IMR-90 (cell line): ENCODE measurements at regions of chr1 and their contacts with region 1.

Region 1: GRCh38 chr1:12619792-12620487 is 1.9 kb upstream of the DHRS3 start:
- DNase-seq: peak; percentile 87
- ATAC-seq: peak; percentile 72
- H3K4me3 ChIP-seq: no peak overlapping the region
- H3K27ac ChIP-seq: no peak overlapping the region
- H3K4me1 ChIP-seq: peaks cover 18% of the 10 kb centered on the region
- H3K27me3 ChIP-seq: no peaks in the 10 kb centered on the region
- CTCF ChIP-seq: peak; percentile 96
- POLR2A ChIP-seq: peak; percentile 54; the same call in 1 of the 2 replicates
- RAD21 ChIP-seq: peak; percentile 99

Region 2: DNA sequence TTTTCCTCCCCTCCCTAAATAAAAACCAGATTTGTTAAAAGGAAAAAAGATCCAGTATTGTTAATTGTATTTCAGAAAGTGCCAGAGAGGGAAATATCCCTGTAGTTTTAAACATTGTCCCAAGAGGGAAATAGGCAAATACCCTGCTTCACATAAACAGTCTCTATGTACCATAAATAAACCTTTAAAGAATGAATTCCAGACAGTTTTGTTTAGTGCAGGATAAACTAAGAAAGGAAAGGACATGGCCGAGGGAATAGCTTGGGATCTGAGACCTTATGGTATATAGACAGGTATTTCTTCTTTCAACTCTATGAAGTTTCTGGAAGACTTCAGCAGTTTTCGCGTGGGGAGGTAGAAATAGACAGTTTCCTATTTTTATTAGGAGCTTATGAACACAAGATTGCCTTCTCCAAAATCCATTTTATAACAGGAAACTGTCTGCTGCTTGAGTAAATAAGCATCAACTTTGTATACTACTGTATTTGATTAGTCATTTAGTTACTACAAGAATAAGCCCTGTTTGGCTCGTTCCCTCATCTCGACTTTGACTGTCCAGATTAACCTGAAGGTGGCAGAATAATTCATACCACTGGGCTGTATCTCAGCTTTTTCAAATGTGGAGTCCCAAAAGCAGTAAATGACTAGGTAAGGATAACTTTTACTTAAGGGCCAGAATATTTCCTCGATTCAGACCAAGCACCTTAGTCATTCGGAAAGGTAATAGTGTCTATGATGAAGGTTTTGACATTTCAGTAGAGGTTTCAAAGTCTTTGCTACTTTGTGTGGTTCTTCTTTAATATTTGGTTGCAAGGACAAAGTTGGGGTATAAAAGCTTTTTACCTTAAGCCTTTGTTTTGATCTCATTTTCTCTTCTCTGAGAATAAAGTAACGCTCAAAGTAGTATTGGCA is 212.6 kb before region 1 on chr1:
- CTCF ChIA-PET with region 1: interaction called, 4 read pairs
- POLR2A ChIA-PET with region 1: no interaction called
- dilution Hi-C with region 1: no loop called
- in situ Hi-C with region 1: loop called (anchors 25 kb)
- intact Hi-C with region 1: loop called (anchors 1 kb)
- DNase-seq: peak; percentile 84
- ATAC-seq: peak; percentile 86
- H3K4me3 ChIP-seq: no peak overlapping the region
- H3K27ac ChIP-seq: peak overlapping the region; percentile 61; the same call in 1 of the 2 replicates
- H3K4me1 ChIP-seq: peaks cover 22% of the 10 kb centered on the region
- H3K27me3 ChIP-seq: no peaks in the 10 kb centered on the region
- CTCF ChIP-seq: peak; percentile 51
- POLR2A ChIP-seq: no peak
- RAD21 ChIP-seq: peak; percentile 66

Region 3: DNA sequence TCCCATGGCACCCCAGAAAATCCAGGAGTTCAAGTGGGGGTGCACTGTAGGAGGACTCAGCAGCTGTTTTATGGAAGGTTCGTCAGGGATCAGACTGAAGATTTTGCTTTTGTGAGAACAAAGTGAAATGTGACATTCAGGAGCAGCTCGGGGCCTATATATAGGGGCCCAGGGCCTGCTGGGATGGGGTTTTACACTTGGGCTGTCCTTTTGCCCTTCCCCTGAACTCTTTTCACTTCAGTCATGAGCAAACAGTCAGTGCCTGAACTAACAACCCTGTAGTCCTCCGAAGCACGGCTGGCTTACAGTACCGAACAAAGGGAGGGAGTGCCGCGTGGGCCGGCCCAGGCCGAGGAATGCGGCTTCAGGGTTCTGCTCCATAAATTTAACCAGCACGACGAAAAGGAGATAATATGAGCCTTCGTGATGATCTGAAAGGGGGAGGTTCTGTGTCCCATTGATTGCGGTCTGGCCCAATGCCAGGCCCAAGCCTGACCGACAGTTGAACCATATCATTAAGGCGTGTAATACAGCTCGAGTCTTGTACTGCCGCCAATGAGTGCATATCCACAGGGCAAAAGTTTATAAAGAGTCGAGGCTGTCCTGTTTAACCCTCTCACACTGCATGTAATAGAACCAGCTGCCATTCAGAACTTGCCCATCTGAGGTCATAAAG is 141.9 kb before region 1 on chr1:
- CTCF ChIA-PET with region 1: interaction called, 4 read pairs
- POLR2A ChIA-PET with region 1: no interaction called
- dilution Hi-C with region 1: no loop called
- in situ Hi-C with region 1: no loop called
- intact Hi-C with region 1: loop called (anchors 1 kb)
- DNase-seq: peak; percentile 99
- ATAC-seq: peak; percentile 85
- H3K4me3 ChIP-seq: no peak overlapping the region
- H3K27ac ChIP-seq: peak overlapping the region; percentile 80
- H3K4me1 ChIP-seq: peaks cover 48% of the 10 kb centered on the region
- H3K27me3 ChIP-seq: no peaks in the 10 kb centered on the region
- CTCF ChIP-seq: no peak
- POLR2A ChIP-seq: no peak
- RAD21 ChIP-seq: no peak

Region 4: DNA sequence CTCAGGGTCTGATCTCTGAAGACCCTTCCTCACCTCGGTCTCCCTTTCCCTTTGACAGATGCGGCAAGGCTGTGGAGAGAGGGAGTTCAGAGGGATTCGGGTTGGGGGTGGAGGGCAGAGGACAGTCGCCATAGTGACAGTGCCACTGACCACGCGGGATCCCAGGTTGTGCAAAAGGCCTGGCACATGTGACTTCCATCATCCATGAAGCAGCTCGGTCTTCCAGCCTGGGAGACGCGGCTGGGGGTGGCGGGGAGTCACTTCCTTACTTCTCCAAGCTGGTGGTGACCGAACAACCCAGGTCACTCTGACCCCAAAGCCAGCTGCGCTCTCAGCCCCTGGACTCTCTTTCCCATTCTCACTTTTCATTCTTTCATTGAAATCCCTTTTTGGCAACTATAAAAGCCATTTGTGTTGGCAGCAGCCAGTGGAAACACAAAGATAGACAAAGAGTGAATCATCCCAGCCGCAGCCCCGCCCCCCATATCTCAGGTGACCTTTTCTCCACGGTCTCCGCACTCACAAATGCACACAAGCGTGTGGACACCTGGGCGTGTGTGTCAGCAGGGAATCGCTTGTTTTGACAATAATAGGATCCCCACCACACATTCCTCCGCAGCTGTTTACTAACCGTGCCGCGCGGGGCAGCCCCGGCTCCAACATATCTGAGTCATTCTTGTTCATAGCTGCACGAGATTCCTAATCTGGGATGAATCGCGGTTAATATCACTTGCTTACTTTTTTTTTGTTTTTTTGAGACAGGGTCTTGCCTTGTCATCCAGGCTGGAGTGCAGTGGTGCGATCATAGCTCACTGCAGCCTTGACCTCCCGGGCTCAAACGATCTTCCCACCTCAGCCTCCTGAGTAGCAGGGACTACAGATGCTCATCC is 70.2 kb before region 1 on chr1:
- CTCF ChIA-PET with region 1: no interaction called
- POLR2A ChIA-PET with region 1: no interaction called
- dilution Hi-C with region 1: no loop called
- in situ Hi-C with region 1: loop called (anchors 10 kb)
- intact Hi-C with region 1: no loop called
- DNase-seq: peak; percentile 98
- ATAC-seq: peak; percentile 90
- H3K4me3 ChIP-seq: no peak overlapping the region
- H3K27ac ChIP-seq: peak overlapping the region; percentile 60
- H3K4me1 ChIP-seq: peaks cover 17% of the 10 kb centered on the region
- H3K27me3 ChIP-seq: peaks cover 7% of the 10 kb centered on the region; the same call in 1 of the 2 replicates
- CTCF ChIP-seq: no peak
- POLR2A ChIP-seq: no peak
- RAD21 ChIP-seq: peak; percentile 25

Region 5: GRCh38 chr1:12596007-12596821 is 23.7 kb before region 1 on chr1:
- CTCF ChIA-PET with region 1: interaction called, 6 read pairs
- POLR2A ChIA-PET with region 1: interaction called, 3 read pairs
- dilution Hi-C with region 1: no loop called
- in situ Hi-C with region 1: no loop called
- intact Hi-C with region 1: loop called (anchors 1 kb)
- DNase-seq: peak; percentile 98
- ATAC-seq: peak; percentile 86
- H3K4me3 ChIP-seq: no peak overlapping the region; the same call in 1 of the 2 replicates
- H3K27ac ChIP-seq: peak overlapping the region; percentile 83
- H3K4me1 ChIP-seq: peaks cover 27% of the 10 kb centered on the region
- H3K27me3 ChIP-seq: no peaks in the 10 kb centered on the region
- CTCF ChIP-seq: no peak
- POLR2A ChIP-seq: peak; percentile 73
- RAD21 ChIP-seq: peak; percentile 17; the same call in 1 of the 2 replicates

Region 6: DNA sequence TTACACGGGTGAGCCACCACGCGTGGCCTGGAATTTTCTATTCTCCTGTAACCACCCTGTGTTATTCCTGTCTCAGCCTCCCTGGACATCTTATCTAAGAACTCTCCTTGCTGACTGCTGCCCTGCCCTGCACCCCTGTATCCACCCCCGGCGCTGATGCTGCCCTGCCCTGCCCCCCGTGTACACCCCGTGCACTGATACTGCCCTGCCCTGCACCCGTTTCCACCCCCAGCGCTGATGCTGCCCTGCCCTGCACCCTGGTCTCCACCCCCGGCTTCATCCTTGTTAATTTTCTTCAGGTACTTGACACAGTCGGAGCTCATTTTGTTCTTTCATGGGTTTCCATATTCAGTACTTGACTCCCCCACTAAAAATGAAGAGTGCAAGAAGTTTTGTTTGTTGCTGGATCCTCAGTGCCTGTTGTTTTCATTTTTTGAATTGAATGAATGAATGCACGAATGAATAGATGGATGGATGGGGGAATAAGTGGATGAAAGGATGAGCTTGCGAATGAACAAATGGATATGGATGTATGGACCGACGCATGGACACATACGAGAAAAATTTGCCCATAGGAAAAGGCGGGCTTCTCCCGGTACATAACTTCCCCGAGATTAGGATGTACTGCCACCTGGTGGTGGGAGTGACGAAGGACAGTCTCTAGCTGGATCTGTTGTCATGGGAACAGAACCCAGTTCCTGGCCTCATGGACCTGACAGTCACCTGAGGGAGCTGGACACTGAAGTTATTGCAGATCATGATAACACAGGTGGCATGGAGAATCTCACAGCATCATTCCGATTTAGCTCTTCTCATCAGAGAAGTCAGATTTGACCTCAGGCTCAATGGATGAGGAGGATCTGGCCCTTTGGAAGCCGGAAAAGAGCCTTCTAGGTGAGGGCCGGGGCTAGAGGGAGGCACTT is 38.9 kb after region 1 on chr1:
- CTCF ChIA-PET with region 1: interaction called, 10 read pairs
- POLR2A ChIA-PET with region 1: no interaction called
- dilution Hi-C with region 1: no loop called
- in situ Hi-C with region 1: no loop called
- intact Hi-C with region 1: loop called (anchors 2 kb)
- DNase-seq: peak; percentile 76
- ATAC-seq: peak; percentile 98
- H3K4me3 ChIP-seq: no peak overlapping the region
- H3K27ac ChIP-seq: no peak overlapping the region
- H3K4me1 ChIP-seq: no peaks in the 10 kb centered on the region
- H3K27me3 ChIP-seq: peaks cover 21% of the 10 kb centered on the region
- CTCF ChIP-seq: peak; percentile 98
- POLR2A ChIP-seq: 0 out of 2 replicates have a peak, but pooled peaks have one; percentile 31
- RAD21 ChIP-seq: peak; percentile 97